GM18951 (cell line): ENCODE measurements at regions of chr1 and their contacts with region 1.

Region 1: DNA sequence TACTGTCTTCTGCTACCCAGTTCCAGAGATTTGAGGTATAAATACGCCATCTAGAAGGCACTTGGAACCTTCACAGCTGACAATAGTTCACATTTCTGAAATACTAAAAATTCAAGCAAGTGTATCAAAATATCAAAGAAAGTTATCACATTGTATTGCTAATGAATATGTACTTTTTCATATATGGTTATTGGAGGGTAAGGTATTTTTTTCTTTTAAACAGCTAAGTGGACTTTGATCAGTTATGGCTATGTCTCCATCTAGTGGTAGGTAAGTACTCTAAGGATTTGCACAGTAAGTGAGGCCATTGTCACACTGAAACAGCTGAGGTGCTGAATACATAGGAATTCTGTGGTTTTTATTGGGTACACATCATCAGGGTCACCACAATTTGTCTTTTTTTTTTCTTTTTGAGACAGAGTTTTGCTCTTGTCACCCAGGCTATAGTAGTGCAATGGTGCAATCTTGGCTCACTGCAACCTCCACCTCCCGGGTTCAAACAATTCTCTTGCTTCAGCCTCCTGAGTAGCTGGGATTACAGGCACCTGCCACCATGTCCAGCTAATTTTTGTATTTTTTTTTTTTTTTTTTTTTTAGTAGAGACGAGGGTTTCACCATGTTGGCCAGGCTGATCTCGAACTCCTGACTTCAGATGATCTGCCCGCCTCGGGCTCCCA is 49.1 kb upstream of the CR2 start:
- POLR2A ChIP-seq: no peak

Region 2: DNA sequence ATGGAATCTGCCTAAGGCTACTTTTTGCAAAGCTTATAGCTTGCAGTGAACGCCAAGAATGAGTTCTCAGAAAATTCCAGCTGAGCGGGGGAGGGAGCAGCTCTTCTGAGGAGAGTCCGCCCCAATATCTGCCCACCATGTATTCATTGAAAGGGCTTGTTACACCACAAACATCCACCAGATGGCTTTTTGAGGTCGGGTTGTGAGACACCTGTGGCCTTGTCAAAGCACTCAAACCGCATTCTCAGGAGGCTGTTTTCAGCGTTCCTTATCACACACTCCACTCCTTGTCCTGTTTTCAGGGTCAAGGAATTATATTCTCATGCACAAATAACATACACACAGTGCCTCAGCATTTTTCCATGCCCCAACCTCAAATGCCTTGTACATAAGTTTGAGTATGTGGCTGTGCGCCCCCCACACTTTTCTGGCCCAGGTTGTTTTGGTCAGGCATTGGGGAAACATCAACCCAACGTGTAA is 320.2 kb before region 1 on chr1:
- in situ Hi-C with region 1: loop called (anchors 5 kb)
- POLR2A ChIP-seq: no peak

Region 3: DNA sequence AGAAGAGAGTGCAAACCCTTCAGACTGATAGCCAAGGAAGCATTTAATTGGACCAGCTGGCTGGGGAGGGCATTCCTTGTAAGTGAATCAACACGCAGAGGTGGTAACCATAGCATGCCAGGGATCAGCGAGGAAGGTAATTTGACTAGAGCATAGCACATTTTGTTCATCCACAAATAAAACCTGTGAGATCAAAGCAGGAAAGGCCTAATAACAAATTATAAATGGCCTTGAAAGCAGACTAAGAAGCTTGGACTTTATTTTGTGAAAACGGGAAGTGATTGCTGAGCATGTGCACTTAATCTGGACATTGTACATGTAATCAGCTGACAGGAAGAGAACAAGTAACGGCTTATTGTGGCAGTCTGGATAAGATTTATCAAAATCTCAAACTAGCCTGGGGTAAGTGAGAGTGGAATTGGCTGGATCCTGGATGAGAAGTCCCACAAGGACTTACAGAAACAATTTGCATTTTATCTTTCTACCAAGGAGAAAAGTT is 95.2 kb before region 1 on chr1:
- in situ Hi-C with region 1: loop called (anchors 10 kb)
- POLR2A ChIP-seq: no peak